ENCODE measurements at regions of chr20 and their contacts with region 1.

Region 1: DNA sequence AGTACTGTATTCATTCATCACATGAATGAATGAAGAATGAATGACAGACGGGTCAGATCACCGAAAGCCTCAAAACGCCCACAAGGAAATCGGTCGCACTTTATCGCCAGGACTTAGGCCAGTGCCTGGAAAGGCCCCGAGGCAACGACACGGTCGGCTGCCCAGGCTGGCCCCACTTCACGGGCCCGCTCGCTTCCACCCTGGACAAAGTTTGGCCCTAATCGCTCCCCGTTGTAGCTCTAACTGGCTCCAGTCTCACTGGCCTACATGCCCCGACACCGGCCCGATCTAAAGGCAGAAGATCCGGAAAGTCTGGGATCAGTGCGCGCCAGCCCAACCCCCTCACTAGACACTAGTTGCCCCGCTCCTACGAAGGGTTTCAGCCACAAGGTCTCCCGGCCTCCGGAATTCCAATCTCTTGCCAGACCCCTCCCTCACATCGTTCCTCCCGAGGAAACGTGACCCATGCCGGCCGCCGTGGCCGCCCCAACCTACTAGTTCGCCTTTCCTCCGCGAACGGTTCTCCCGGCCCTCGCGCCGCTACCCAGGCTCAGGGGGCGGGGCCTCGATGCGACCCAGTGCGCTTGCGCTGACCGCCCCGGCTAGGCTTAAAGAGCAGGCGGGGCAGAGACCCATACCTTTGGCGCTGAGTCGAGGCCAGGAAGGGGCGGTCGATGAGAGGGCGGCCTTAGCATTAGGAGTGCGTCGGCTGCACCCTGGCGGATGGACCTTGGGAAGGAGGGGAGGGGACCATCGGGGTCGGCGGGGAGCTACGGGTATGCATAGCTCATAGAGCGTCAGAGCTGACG is at the starts of genes GSS and MYH7B:
- DNase-seq: peak; percentile 100
- H3K4me3 ChIP-seq: peak within 1 kb of the TSS; percentile 57
- H3K4me3 Mint-ChIP-seq: peak within 1 kb of the TSS; percentile 90
- H3K27ac Mint-ChIP-seq: peak within 1 kb of the TSS; percentile 96
- H3K4me1 ChIP-seq: peaks cover 5% of the 10 kb centered on the region
- H3K4me1 Mint-ChIP-seq: peaks cover 25% of the 10 kb centered on the region
- H3K27me3 ChIP-seq: no peaks in the 10 kb centered on the region
- H3K27me3 Mint-ChIP-seq: no peaks in the 10 kb centered on the region
- CTCF ChIP-seq: peak; percentile 64 to 83
- total RNA-seq, gene GSS: 138 TPM in 2 replicates
- total RNA-seq, gene MYH7B: 1.9 and 2.5 TPM in 2 replicates

Region 2: DNA sequence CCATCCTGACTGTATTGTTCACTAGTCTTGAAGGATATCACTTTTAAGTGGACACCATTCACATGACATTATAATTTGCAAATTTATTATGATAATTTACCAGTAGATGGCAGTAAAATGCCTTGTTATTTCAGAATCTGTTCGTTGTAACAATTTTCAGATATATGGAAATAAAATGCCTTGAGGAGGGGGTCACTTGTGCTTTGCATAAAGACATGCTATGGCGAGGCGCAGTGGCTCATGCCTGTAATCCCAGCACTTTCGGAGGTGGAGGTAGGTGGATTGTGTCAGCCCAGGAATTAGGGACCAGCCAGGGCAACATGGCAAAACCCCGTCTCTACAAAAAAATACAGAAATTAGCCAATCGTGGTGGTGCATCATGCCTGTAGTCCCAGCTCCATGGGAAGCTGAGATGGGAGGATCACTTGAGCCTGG is 121.0 kb before region 1 on chr20:
- CTCF ChIA-PET with region 1: interaction called, 11 read pairs
- POLR2A ChIA-PET with region 1: no interaction called
- intact Hi-C with region 1: loop called (anchors 1 kb)
- DNase-seq: peak in 1 of 2 experiments; percentile 40
- H3K4me3 ChIP-seq: no peak overlapping the region
- H3K4me3 Mint-ChIP-seq: no peak overlapping the region
- H3K27ac Mint-ChIP-seq: no peak overlapping the region
- H3K4me1 ChIP-seq: peaks cover 7% of the 10 kb centered on the region; the same call in 1 of the 2 replicates
- H3K4me1 Mint-ChIP-seq: no peaks in the 10 kb centered on the region
- H3K27me3 ChIP-seq: no peaks in the 10 kb centered on the region
- H3K27me3 Mint-ChIP-seq: peaks cover 9% of the 10 kb centered on the region
- CTCF ChIP-seq: peak; percentile 43 to 75

Region 3: GRCh38 chr20:34883087-34883688 is 72.2 kb before region 1 on chr20:
- CTCF ChIA-PET with region 1: interaction called, 12 read pairs
- POLR2A ChIA-PET with region 1: no interaction called
- intact Hi-C with region 1: no loop called
- DNase-seq: no peak
- H3K4me3 ChIP-seq: no peak overlapping the region
- H3K4me3 Mint-ChIP-seq: no peak overlapping the region
- H3K27ac Mint-ChIP-seq: no peak overlapping the region
- H3K4me1 ChIP-seq: peaks cover 5% of the 10 kb centered on the region; the same call in 1 of the 2 replicates
- H3K4me1 Mint-ChIP-seq: peaks cover 11% of the 10 kb centered on the region
- H3K27me3 ChIP-seq: no peaks in the 10 kb centered on the region
- H3K27me3 Mint-ChIP-seq: no peaks in the 10 kb centered on the region
- CTCF ChIP-seq: no peak

Region 4: DNA sequence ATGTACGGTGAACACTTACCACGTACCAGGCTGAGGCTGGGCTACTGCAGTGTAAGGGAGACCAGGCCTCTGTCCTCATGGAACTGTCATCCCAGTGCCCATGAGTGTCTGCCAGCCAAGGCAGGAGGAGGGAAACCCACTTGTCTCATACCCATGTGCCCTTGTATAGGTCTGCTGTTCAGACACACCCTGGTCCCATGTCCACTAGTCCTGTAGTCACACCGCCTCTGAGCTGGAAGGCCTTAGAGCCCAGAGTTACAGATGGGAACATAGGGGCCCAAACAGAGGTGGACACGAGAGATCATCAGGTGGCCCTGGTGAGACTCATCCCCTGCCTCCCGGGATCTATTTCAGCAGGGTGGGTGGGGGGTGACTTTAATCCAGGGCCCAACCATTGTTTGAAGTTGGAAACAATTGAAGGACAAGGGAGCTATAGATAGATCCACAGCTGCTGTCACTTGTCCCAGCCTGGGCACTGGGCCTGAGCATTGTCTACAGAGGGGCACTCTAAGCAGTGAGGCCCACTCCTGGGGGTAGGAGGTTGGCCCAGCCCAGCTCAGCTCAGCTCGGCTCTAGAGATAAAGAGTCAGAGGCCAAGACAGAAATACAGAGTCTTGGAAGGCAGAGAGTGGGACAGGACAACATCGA is 14.9 kb after region 1 on chr20:
- CTCF ChIA-PET with region 1: interaction called, 10 read pairs
- POLR2A ChIA-PET with region 1: interaction called, 3 read pairs
- intact Hi-C with region 1: no loop called
- DNase-seq: no peak
- H3K4me3 ChIP-seq: no peak overlapping the region
- H3K4me3 Mint-ChIP-seq: no peak overlapping the region
- H3K27ac Mint-ChIP-seq: no peak overlapping the region
- H3K4me1 ChIP-seq: no peaks in the 10 kb centered on the region
- H3K4me1 Mint-ChIP-seq: no peaks in the 10 kb centered on the region
- H3K27me3 ChIP-seq: no peaks in the 10 kb centered on the region
- H3K27me3 Mint-ChIP-seq: peaks cover 2% of the 10 kb centered on the region
- CTCF ChIP-seq: no peak

Region 5: DNA sequence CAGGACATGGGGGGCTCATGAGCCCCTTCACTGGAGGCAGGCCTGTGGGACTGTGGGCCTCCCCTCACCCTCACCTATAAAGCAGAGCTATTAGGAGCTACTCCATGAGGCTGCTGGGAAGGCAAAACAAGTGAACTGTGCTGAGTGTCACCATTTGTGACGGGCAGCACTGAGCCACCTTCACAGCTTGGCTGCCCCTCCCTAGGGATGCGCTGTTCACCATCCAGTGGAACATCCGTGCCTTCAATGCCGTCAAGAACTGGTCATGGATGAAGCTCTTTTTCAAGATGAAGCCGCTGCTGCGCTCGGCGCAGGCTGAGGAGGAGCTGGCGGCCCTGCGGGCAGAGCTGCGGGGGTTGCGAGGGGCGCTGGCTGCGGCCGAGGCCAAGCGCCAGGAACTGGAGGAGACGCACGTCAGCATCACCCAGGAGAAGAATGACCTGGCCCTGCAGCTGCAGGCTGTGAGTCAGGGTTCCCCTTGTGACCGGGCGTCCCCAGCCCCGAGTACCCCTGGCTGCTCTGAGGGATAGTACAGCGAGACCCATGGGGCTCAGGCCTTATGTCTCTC is 38.6 kb after region 1 on chr20:
- CTCF ChIA-PET with region 1: no interaction called
- POLR2A ChIA-PET with region 1: no interaction called
- intact Hi-C with region 1: no loop called
- DNase-seq: no peak
- H3K4me3 ChIP-seq: no peak overlapping the region
- H3K4me3 Mint-ChIP-seq: no peak overlapping the region
- H3K27ac Mint-ChIP-seq: no peak overlapping the region
- H3K4me1 ChIP-seq: no peaks in the 10 kb centered on the region
- H3K4me1 Mint-ChIP-seq: no peaks in the 10 kb centered on the region
- H3K27me3 ChIP-seq: no peaks in the 10 kb centered on the region
- H3K27me3 Mint-ChIP-seq: no peaks in the 10 kb centered on the region
- CTCF ChIP-seq: no peak

Measured in Caco-2 (cell line).